CD4-positive, alpha-beta memory T cell (primary cell): ENCODE measurements at regions of chr12 and their contacts with region 1.

Region 1: DNA sequence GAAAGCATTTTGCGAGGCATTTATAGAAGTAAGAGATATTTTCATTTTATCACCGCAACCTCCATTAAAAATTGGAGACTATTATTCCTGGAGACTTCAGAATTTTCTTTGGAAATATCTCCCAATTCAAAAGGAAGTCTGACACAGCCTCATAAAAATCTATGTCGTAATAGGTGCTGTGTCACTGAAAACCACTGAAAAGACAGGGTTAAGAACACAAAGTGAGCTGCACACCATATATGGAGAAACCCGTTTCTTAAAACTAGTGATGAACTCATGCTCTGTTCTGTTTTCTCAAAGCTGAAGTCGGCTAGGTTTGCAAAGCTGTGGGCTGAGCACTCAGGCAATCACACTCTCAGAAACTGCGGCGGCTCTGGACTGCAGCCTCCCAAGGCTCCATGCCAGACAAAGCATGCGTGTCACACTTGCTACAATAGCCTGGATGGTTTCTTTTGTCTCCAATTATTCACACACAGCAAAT is at the start of gene GLIPR1:
- DNase-seq: peak; percentile 78 to 85 (median 83)
- H3K4me3 ChIP-seq: peak within 1 kb of the TSS; percentile 74 to 84
- H3K4me3 Mint-ChIP-seq: peak within 1 kb of the TSS; percentile 92 to 99 (median 97)
- H3K27ac ChIP-seq: peak within 1 kb of the TSS; percentile 72
- H3K27ac Mint-ChIP-seq: peak within 1 kb of the TSS; percentile 98 to 100 (median 99)
- H3K4me1 ChIP-seq: peaks cover 77% of the 10 kb centered on the region
- H3K4me1 Mint-ChIP-seq: peaks cover 60 to 85% (median 70%) of the 10 kb centered on the region in 4 donors
- H3K27me3 ChIP-seq: no peaks in the 10 kb centered on the region
- H3K27me3 Mint-ChIP-seq: peaks cover 0 to 2% of the 10 kb centered on the region in 2 donors
- total RNA-seq, gene GLIPR1: 96.1 to 99.8 TPM

Region 2: DNA sequence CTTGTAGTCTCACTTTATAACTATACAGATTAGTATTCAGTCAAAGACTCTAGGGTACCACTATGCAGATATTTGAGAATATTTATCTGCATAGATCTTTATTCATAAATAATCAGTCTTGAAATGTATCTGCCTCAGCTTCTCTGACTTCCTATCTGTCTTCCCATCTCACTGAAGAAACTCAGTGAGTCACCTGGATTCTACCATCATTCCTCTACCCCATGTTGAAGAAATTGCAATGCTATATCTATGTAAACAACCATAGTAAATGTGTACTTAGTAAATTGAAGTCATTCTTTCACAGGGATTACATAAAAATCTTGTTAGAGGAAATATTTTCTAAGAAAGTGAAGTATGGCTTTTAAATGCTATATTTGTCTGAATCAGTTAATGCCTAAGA is 654.4 kb before region 1 on chr12:
- CTCF ChIA-PET with region 1: no interaction called
- POLR2A ChIA-PET with region 1: no interaction called
- intact Hi-C with region 1: no loop called
- DNase-seq: no peak
- H3K4me3 ChIP-seq: no peak overlapping the region
- H3K4me3 Mint-ChIP-seq: no peak overlapping the region
- H3K27ac ChIP-seq: no peak overlapping the region
- H3K27ac Mint-ChIP-seq: no peak overlapping the region
- H3K4me1 ChIP-seq: no peaks in the 10 kb centered on the region
- H3K4me1 Mint-ChIP-seq: no peaks in the 10 kb centered on the region
- H3K27me3 ChIP-seq: no peaks in the 10 kb centered on the region
- H3K27me3 Mint-ChIP-seq: no peaks in the 10 kb centered on the region

Region 3: GRCh38 chr12:75334384-75335030 is 146.0 kb before region 1 on chr12 and contains the start of gene GLIPR1L1:
- CTCF ChIA-PET with region 1: interaction called, 35 read pairs
- POLR2A ChIA-PET with region 1: interaction called, 3 read pairs
- intact Hi-C with region 1: loop called (anchors 1 kb)
- DNase-seq: peak; percentile 76 to 82 (median 77)
- H3K4me3 ChIP-seq: peak within 1 kb of the TSS in 1 of 2 donors; percentile 54
- H3K4me3 Mint-ChIP-seq: peak within 1 kb of the TSS; percentile 70 to 86 (median 80)
- H3K27ac ChIP-seq: no peak within 1 kb of the TSS
- H3K27ac Mint-ChIP-seq: peak within 1 kb of the TSS in 1 of 7 donors; percentile 54
- H3K4me1 ChIP-seq: peaks cover 21% of the 10 kb centered on the region
- H3K4me1 Mint-ChIP-seq: peaks cover 13 to 21% (median 17%) of the 10 kb centered on the region in 4 donors
- H3K27me3 ChIP-seq: peaks cover 6% of the 10 kb centered on the region
- H3K27me3 Mint-ChIP-seq: peaks cover 6 to 12% of the 10 kb centered on the region in 2 donors
- total RNA-seq, gene GLIPR1L1: not detected

Region 4: DNA sequence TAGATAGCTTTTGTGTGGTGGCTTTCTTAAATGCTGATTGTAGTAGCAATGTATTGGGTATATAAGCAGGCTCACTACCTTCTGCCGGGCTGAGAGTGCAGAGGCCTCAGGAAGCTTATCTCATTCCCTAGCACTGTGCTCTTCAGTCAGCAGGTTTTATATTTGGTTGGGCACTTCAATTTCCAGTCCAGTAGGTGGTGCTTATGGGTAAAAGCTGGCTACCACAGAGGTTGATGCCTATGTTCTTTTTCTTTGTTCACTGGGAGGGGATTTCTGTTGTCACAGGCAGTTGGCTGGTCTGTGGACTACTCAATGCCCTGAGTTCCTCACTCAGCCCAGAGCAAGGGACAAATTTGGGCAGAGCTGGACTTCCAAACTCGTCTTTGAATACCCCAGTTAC is 42.9 kb before region 1 on chr12:
- CTCF ChIA-PET with region 1: interaction called, 158 read pairs
- POLR2A ChIA-PET with region 1: interaction called, 27 read pairs
- intact Hi-C with region 1: loop called (anchors 2 kb)
- DNase-seq: peak; percentile 43 to 61 (median 51)
- H3K4me3 ChIP-seq: no peak overlapping the region
- H3K4me3 Mint-ChIP-seq: peak overlapping the region in 2 of 8 donors; percentile 17 to 43
- H3K27ac ChIP-seq: no peak overlapping the region
- H3K27ac Mint-ChIP-seq: peak overlapping the region in 5 of 7 donors; percentile 52 to 91 (median 57)
- H3K4me1 ChIP-seq: peaks cover 13% of the 10 kb centered on the region
- H3K4me1 Mint-ChIP-seq: peaks cover 11 to 17% (median 15%) of the 10 kb centered on the region in 4 donors
- H3K27me3 ChIP-seq: no peaks in the 10 kb centered on the region
- H3K27me3 Mint-ChIP-seq: no peaks in the 10 kb centered on the region

Region 5: DNA sequence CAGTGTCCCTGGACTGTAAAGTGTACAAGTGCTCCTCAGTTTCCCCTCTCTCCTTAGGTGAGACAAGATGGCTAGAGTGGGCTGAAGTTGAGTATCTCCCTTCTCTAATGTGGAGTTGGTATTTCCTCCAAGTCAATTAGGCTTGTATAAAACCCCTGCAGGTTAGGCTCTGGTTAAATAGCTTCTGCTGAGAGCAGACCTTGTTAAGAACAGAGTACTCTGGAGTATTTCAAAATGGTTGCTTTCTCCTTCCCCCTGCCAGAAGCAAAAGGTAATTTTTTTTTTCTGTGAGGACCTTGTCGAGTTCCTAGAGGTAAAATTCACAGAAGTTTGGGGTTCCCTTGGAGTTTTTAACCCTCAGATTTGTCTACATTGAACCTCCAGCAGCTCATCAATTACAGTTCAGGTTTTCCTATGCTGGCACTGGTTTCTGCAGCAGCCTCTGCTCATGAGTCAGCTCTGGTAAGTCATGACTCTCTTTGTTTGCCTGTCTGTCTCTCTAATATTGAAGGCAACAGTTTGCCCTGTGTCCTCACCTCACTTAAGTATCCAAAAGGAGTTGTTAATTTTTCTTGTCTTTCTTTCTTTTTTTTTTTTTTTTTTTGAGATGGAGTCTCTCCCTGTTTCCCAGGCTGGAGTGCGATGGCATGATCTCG is 27.7 kb before region 1 on chr12:
- CTCF ChIA-PET with region 1: interaction called, 56 read pairs
- POLR2A ChIA-PET with region 1: interaction called, 204 read pairs
- intact Hi-C with region 1: loop called (anchors 1 kb)
- DNase-seq: no peak
- H3K4me3 ChIP-seq: no peak overlapping the region
- H3K4me3 Mint-ChIP-seq: no peak overlapping the region
- H3K27ac ChIP-seq: no peak overlapping the region
- H3K27ac Mint-ChIP-seq: no peak overlapping the region
- H3K4me1 ChIP-seq: peaks cover 18% of the 10 kb centered on the region
- H3K4me1 Mint-ChIP-seq: peaks cover 15 to 24% (median 18%) of the 10 kb centered on the region in 4 donors
- H3K27me3 ChIP-seq: no peaks in the 10 kb centered on the region
- H3K27me3 Mint-ChIP-seq: no peaks in the 10 kb centered on the region

Region 6: GRCh38 chr12:75505706-75506312 is 25.3 kb after region 1 on chr12:
- CTCF ChIA-PET with region 1: interaction called, 68 read pairs
- POLR2A ChIA-PET with region 1: interaction called, 39 read pairs
- intact Hi-C with region 1: loop called (anchors 1 kb)
- DNase-seq: peak in 4 of 5 donors; percentile 28 to 37 (median 36)
- H3K4me3 ChIP-seq: no peak overlapping the region
- H3K4me3 Mint-ChIP-seq: no peak overlapping the region
- H3K27ac ChIP-seq: no peak overlapping the region
- H3K27ac Mint-ChIP-seq: peak overlapping the region; percentile 12 to 64 (median 52)
- H3K4me1 ChIP-seq: peaks cover 19% of the 10 kb centered on the region
- H3K4me1 Mint-ChIP-seq: peaks cover 22 to 30% (median 25%) of the 10 kb centered on the region in 4 donors
- H3K27me3 ChIP-seq: no peaks in the 10 kb centered on the region
- H3K27me3 Mint-ChIP-seq: no peaks in the 10 kb centered on the region

Region 7: GRCh38 chr12:76037130-76038103 is 556.9 kb after region 1 on chr12:
- CTCF ChIA-PET with region 1: interaction called, 13 read pairs
- POLR2A ChIA-PET with region 1: interaction called, 29 read pairs
- intact Hi-C with region 1: no loop called
- DNase-seq: peak; percentile 60 to 66 (median 64)
- H3K4me3 ChIP-seq: no peak overlapping the region
- H3K4me3 Mint-ChIP-seq: no peak overlapping the region
- H3K27ac ChIP-seq: no peak overlapping the region
- H3K27ac Mint-ChIP-seq: peak overlapping the region in 5 of 7 donors; percentile 0 to 68 (median 6)
- H3K4me1 ChIP-seq: peaks cover 5% of the 10 kb centered on the region
- H3K4me1 Mint-ChIP-seq: peaks cover 10 to 17% (median 13%) of the 10 kb centered on the region in 4 donors
- H3K27me3 ChIP-seq: no peaks in the 10 kb centered on the region
- H3K27me3 Mint-ChIP-seq: no peaks in the 10 kb centered on the region